ENCODE measurements at regions of chr4 and their contacts with region 1.

Region 1: DNA sequence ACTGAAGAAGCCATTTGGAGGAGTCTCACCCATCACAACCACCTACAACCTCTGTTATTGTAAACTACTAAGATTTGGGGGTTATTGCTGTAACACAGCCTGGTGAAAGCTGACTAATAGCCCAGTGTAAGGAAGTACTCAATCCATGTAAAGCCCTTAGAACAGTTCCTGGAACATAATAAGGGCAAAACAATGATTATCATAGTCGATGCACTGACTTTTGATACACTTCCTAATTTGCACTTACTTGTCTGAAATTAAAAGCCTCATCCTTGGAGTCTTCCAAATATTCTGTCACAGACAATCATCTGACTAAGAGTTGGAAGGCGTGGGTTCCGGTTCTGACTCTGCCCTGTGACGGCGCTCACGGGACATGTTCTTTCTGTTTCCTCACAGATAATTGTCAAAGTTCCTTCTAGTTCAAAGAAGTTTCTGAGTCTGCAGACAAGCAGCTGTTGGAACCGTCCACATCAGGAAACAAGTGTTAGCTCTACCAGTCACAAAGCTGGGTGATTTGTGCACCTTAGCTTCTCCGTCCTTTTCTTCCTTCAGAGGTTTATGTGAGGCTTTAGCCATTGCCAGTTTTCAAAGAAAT is 33.4 kb upstream of the RASGEF1B start:
- DNase-seq: peak; percentile 96 to 99 (median 97)
- H3K4me3 ChIP-seq: peak overlapping the region in 1 of 3 experiments; percentile 19
- H3K4me3 Mint-ChIP-seq: peak overlapping the region; percentile 52 to 79
- H3K27ac ChIP-seq: peak overlapping the region; percentile 96 to 100
- H3K27ac Mint-ChIP-seq: peak overlapping the region; percentile 97 to 100 (median 99)
- H3K4me1 ChIP-seq: peaks cover 57 to 62% of the 10 kb centered on the region in 2 donors
- H3K4me1 Mint-ChIP-seq: peaks cover 66% of the 10 kb centered on the region
- H3K27me3 ChIP-seq: no peaks in the 10 kb centered on the region
- H3K27me3 Mint-ChIP-seq: peaks cover 3 to 5% (median 3%) of the 10 kb centered on the region in 3 donors
- CTCF ChIP-seq: no peak

Region 2: DNA sequence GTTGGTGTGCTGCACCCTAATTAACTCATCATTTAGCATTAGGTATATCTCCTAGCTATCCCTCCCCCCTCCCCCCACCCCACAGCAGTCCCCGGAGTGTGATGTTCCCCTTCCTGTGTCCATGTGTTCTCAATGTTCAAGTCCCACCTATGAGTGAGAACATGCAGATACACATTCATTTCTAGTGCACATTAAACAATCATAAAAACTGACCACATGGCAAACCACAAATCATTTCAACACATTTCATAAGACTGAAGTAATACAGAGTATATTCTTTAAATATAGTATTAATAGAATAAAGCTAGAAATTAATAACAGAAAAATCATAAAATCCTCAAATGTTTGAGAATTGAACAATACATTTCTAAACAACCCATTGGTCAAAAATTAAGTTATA is 324.2 kb before region 1 on chr4:
- intact Hi-C with region 1: no loop called
- DNase-seq: no peak
- H3K4me3 ChIP-seq: no peak overlapping the region
- H3K4me3 Mint-ChIP-seq: no peak overlapping the region
- H3K27ac ChIP-seq: no peak overlapping the region
- H3K27ac Mint-ChIP-seq: no peak overlapping the region
- H3K4me1 ChIP-seq: no peaks in the 10 kb centered on the region
- H3K4me1 Mint-ChIP-seq: peaks cover 3% of the 10 kb centered on the region
- H3K27me3 ChIP-seq: no peaks in the 10 kb centered on the region
- H3K27me3 Mint-ChIP-seq: no peaks in the 10 kb centered on the region
- CTCF ChIP-seq: no peak

Region 3: DNA sequence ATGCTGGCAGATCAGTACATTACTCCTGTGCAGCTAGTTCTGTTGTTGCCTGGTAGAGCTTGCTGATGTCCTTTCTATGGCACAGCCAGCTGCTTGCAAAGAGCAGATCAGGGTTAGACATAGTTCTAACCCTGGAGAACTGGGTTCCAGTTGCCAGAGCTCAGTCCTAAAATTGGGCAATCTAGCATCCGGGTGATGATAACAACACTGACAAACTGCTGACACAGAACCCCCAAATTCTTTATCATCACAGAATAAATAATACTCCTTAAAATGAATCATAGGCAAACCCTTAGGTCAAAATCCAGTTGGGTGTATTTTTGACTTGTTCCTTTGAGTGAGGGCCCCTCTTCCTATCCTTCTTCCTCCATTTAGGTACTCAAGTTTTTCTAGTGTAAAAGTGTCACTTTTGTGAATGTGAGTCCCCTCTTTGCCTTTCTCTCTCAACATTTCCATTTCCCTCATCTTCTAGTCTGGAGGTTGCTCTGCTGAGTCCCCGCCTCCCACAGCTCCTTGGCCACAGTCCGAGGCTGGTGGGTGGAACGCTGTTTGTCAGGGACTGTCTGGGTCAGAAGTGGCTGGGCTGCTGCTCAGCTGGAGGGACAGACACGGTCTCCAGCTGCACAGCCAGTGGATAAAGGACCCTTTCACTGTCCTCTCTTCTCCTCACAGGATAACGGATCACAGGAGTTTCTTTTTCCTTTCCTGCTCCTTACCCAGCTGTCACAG is 60.2 kb after region 1 on chr4:
- intact Hi-C with region 1: loop called (anchors 2 to 5 kb)
- DNase-seq: peak; percentile 34 to 64 (median 40)
- H3K4me3 ChIP-seq: no peak overlapping the region
- H3K4me3 Mint-ChIP-seq: peak overlapping the region; percentile 1 to 47
- H3K27ac ChIP-seq: peak overlapping the region in 1 of 2 donors; percentile 47
- H3K27ac Mint-ChIP-seq: peak overlapping the region in 6 of 7 donors; percentile 73 to 93 (median 86)
- H3K4me1 ChIP-seq: peaks cover 27 to 37% of the 10 kb centered on the region in 2 donors
- H3K4me1 Mint-ChIP-seq: peaks cover 38% of the 10 kb centered on the region
- H3K27me3 ChIP-seq: no peaks in the 10 kb centered on the region
- H3K27me3 Mint-ChIP-seq: peaks cover 0 to 3% (median 0%) of the 10 kb centered on the region in 3 donors
- CTCF ChIP-seq: no peak

Region 4: DNA sequence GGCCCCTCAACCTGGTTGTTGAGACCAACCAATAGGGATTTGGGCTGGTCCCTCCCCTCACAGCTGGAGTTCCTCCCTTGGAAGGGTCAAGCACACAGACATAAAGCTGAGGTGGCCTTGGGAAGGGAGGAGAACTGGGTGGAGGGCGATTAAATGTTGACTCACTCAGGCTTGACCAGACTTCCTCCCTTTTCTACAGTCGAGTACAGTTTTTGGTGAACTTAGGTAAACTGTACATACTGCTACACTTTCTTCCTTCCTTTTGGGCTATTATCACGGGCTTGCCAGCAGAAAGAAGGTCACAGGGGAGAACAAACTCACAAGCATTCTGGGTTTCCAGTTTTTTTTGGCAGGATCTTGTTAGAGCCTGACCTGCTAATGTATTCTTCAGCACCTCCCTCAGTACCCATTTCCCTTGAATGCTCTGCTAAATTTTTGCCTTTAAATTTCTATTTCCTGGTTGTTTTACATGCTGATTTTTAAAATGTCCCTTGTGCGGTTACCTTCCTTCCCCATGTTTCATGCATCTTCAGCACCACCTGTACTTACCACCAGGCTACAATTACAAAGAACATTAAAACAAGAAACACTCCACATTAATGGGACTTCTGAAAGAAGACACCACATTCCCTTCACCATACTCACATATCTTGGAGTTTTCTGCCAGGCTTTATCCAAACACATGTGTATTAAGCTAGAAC is 101.8 kb after region 1 on chr4:
- intact Hi-C with region 1: loop called in 1 of 2 experiments (anchors 5 kb)
- DNase-seq: peak; percentile 59 to 80 (median 79)
- H3K4me3 ChIP-seq: no peak overlapping the region
- H3K4me3 Mint-ChIP-seq: peak overlapping the region in 1 of 2 donors; percentile 31
- H3K27ac ChIP-seq: peak overlapping the region; percentile 41 to 65
- H3K27ac Mint-ChIP-seq: peak overlapping the region; percentile 4 to 92 (median 68)
- H3K4me1 ChIP-seq: peaks cover 26 to 28% of the 10 kb centered on the region in 2 donors
- H3K4me1 Mint-ChIP-seq: peaks cover 29% of the 10 kb centered on the region
- H3K27me3 ChIP-seq: no peaks in the 10 kb centered on the region
- H3K27me3 Mint-ChIP-seq: peaks cover 0 to 2% (median 0%) of the 10 kb centered on the region in 3 donors
- CTCF ChIP-seq: no peak

Region 5: GRCh38 chr4:81631958-81632441 is 126.9 kb after region 1 on chr4:
- intact Hi-C with region 1: loop called in 1 of 2 experiments (anchors 10 kb)
- DNase-seq: peak in 2 of 3 donors; percentile 32 to 44
- H3K4me3 ChIP-seq: no peak overlapping the region
- H3K4me3 Mint-ChIP-seq: no peak overlapping the region
- H3K27ac ChIP-seq: no peak overlapping the region
- H3K27ac Mint-ChIP-seq: no peak overlapping the region
- H3K4me1 ChIP-seq: peaks cover 8 to 21% of the 10 kb centered on the region in 2 donors
- H3K4me1 Mint-ChIP-seq: peaks cover 25% of the 10 kb centered on the region
- H3K27me3 ChIP-seq: no peaks in the 10 kb centered on the region
- H3K27me3 Mint-ChIP-seq: peaks cover 0 to 5% (median under 1%) of the 10 kb centered on the region in 3 donors
- CTCF ChIP-seq: no peak

Region 6: GRCh38 chr4:81769244-81769643 is 264.1 kb after region 1 on chr4:
- intact Hi-C with region 1: no loop called
- DNase-seq: no peak
- H3K4me3 ChIP-seq: no peak overlapping the region
- H3K4me3 Mint-ChIP-seq: no peak overlapping the region
- H3K27ac ChIP-seq: no peak overlapping the region
- H3K27ac Mint-ChIP-seq: no peak overlapping the region
- H3K4me1 ChIP-seq: no peaks in the 10 kb centered on the region
- H3K4me1 Mint-ChIP-seq: no peaks in the 10 kb centered on the region
- H3K27me3 ChIP-seq: no peaks in the 10 kb centered on the region
- H3K27me3 Mint-ChIP-seq: peaks cover 0 to 1% (median 0%) of the 10 kb centered on the region in 3 donors
- CTCF ChIP-seq: no peak

Measured in CD14-positive monocyte (primary cell).